H1 (cell line): ENCODE measurements at regions of chr19 and their contacts with region 1.

Region 1: GRCh38 chr19:48110350-48110966 is at the start of gene PLA2G4C:
- DNase-seq: peak; percentile 82 to 83
- H3K4me3 ChIP-seq: peak within 1 kb of the TSS; percentile 37 to 54 (median 47)
- H3K27ac ChIP-seq: peak within 1 kb of the TSS; percentile 1; the same call in 1 of the 2 replicates
- H3K4me1 ChIP-seq: peaks cover 0 to 3% (median 0%) of the 10 kb centered on the region in 4 experiments; a peak in 2 of 7 replicates
- H3K27me3 ChIP-seq: no peaks in the 10 kb centered on the region
- CTCF ChIP-seq: no peak
- EP300 ChIP-seq: no peak
- POLR2A ChIP-seq: peak in 1 of 2 experiments; percentile 52; a peak in 1 of 3 replicates
- RAD21 ChIP-seq: no peak
- total RNA-seq, gene PLA2G4C: 14.9 and 17.5 TPM in 2 replicates

Region 2: GRCh38 chr19:48095612-48096175 is 14.8 kb before region 1 on chr19:
- CTCF ChIA-PET with region 1: interaction called, 13 read pairs
- POLR2A ChIA-PET with region 1: no interaction called
- DNase-seq: no peak
- H3K4me3 ChIP-seq: no peak overlapping the region
- H3K27ac ChIP-seq: no peak overlapping the region
- H3K4me1 ChIP-seq: no peaks in the 10 kb centered on the region
- H3K27me3 ChIP-seq: no peaks in the 10 kb centered on the region
- CTCF ChIP-seq: no peak
- EP300 ChIP-seq: no peak
- POLR2A ChIP-seq: no peak
- RAD21 ChIP-seq: no peak

Region 3: DNA sequence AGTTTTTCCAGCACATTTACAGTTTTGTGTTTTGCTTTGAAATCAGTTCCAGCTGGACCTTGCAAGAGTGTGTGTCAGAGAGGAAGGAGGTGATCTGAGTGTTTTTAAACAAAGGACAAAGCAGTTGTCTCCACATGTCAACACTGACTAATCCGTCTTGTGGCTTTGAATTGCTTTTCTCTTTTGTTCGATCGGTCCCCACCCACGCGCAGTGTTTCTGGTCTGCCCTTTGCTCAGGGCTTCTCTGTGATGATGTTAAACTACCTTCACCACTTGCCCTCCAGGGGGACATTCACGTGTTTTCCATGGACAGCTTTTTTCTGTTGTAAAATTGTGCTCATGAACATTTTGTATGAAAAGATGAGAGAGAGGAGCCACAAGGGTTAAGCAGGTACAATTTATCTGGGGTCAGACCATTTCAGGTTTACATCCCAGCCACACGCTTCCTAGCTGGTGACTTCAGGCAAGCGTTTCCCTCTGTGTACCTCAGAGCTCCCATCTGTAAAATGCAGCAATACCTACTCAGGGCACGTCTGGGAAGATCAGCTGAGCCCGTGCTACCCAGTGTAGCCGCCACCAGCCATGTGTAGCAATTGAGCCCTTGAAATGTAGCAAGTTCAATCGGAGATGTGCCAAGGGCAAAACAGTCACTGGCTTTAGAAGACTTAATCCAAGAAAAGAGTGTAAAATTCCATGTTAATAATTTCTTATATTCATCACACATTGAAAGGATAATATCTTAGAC is 13.6 kb after region 1 on chr19:
- CTCF ChIA-PET with region 1: interaction called, 21 read pairs
- POLR2A ChIA-PET with region 1: interaction called, 3 read pairs
- DNase-seq: no peak
- H3K4me3 ChIP-seq: no peak overlapping the region
- H3K27ac ChIP-seq: no peak overlapping the region
- H3K4me1 ChIP-seq: no peaks in the 10 kb centered on the region
- H3K27me3 ChIP-seq: no peaks in the 10 kb centered on the region
- CTCF ChIP-seq: no peak
- EP300 ChIP-seq: no peak
- POLR2A ChIP-seq: no peak
- RAD21 ChIP-seq: no peak

Region 4: GRCh38 chr19:48135411-48135810 is 25.0 kb after region 1 on chr19:
- CTCF ChIA-PET with region 1: interaction called, 10 read pairs
- POLR2A ChIA-PET with region 1: interaction called, 4 read pairs
- DNase-seq: peak in 1 of 2 experiments; percentile 59
- H3K4me3 ChIP-seq: no peak overlapping the region
- H3K27ac ChIP-seq: no peak overlapping the region
- H3K4me1 ChIP-seq: no peaks in the 10 kb centered on the region
- H3K27me3 ChIP-seq: no peaks in the 10 kb centered on the region
- CTCF ChIP-seq: no peak
- EP300 ChIP-seq: no peak
- POLR2A ChIP-seq: no peak
- RAD21 ChIP-seq: no peak

Region 5: DNA sequence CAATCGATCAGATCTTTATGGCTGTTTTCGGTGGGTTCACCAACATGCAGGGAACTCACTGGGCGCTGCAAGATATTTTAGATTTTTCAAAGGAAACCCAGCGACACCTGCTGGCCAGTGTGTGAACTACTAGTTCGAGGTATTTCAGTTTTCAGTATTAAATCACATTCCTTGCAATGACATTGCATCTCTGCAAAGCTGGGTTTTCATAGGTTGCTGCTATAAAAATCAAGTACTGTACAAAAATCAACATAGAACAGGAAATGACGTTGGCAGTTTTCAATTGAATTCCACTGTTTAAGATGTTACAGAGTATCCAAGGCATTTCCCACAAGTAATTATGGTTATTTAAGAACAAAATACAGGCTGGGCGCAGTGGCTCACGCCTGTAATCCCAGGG is 42.1 kb after region 1 on chr19:
- CTCF ChIA-PET with region 1: interaction called, 19 read pairs
- POLR2A ChIA-PET with region 1: no interaction called
- DNase-seq: peak in 1 of 2 experiments; percentile 81
- H3K4me3 ChIP-seq: no peak overlapping the region
- H3K27ac ChIP-seq: no peak overlapping the region
- H3K4me1 ChIP-seq: no peaks in the 10 kb centered on the region
- H3K27me3 ChIP-seq: no peaks in the 10 kb centered on the region; a peak in 1 of 7 replicates
- CTCF ChIP-seq: peak in 2 of 3 experiments; percentile 72 to 73; a peak in 3 of 4 replicates
- EP300 ChIP-seq: no peak
- POLR2A ChIP-seq: no peak
- RAD21 ChIP-seq: peak; percentile 69 to 74